ENCODE measurements at regions of chr11 and their contacts with region 1.

Region 1: DNA sequence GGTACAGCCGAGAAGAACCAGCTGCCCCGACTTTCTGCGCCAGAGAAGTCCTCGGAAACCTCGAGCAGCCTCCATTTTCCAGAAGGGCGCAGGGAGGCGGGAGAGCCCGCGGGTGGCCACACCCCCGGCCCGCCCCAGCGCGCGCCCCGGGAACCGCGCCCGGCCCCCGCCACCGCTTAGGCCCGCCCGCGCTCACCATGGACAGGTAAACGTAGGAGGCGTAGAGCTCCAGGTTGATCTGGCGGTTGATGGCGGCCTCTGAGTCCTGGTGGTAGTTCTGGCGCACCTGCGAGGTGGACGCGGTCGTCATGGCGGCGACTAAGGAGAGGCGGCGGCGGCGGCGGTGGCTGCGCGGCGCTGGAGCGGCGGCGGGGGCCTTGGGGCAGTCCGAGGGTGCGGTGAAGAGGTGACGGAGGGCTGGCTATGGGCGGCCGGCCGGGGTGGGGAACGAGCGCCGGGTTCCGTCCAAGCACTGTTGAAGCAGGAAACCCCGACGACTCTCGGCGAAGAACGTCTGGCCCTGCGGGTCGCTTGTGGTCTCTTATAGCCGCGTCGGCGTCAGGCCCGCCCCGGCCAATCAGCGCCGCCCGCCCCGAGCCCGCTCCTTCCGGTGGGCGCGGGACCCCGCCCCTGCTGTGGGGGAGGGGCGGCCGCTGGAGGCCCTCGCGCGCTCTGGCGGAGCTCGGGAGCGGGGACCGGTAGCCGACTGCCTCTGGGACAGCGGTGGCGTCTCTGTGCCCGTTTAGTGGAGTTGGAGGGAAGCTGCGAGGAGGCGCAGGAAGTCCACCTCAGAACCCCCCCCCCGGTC is at the start of gene FTH1:
- DNase-seq: peak; percentile 61 to 94
- H3K4me3 ChIP-seq: peak within 1 kb of the TSS; percentile 88 to 96
- H3K27ac ChIP-seq: peak within 1 kb of the TSS; percentile 98 to 99
- H3K4me1 ChIP-seq: peaks cover 23 to 46% of the 10 kb centered on the region in 2 donors
- H3K27me3 ChIP-seq: no peaks in the 10 kb centered on the region
- CTCF ChIP-seq: no peak
- total RNA-seq, gene FTH1: 2,353 TPM

Region 2: GRCh38 chr11:61816736-61817455 is 150.4 kb before region 1 on chr11 and contains the start of gene FADS1:
- intact Hi-C with region 1: loop called (anchors 5 kb)
- DNase-seq: peak; percentile 78 to 98
- H3K4me3 ChIP-seq: peak within 1 kb of the TSS; percentile 85 to 86
- H3K27ac ChIP-seq: peak within 1 kb of the TSS; percentile 99
- H3K4me1 ChIP-seq: peaks cover 0 to 9% of the 10 kb centered on the region in 2 donors
- H3K27me3 ChIP-seq: no peaks in the 10 kb centered on the region
- CTCF ChIP-seq: peak; percentile 55 to 74 (median 58)
- total RNA-seq, gene FADS1: 47.1 TPM

Region 3: GRCh38 chr11:61891331-61892084 is 75.8 kb before region 1 on chr11 and contains the start of gene FADS3:
- intact Hi-C with region 1: loop called (anchors 1 kb)
- DNase-seq: peak; percentile 80 to 96
- H3K4me3 ChIP-seq: peak within 1 kb of the TSS; percentile 99
- H3K27ac ChIP-seq: peak within 1 kb of the TSS; percentile 90 to 98
- H3K4me1 ChIP-seq: peaks cover 22 to 30% of the 10 kb centered on the region in 2 donors
- H3K27me3 ChIP-seq: no peaks in the 10 kb centered on the region
- CTCF ChIP-seq: no peak
- total RNA-seq, gene FADS3: 191 TPM

Region 4: GRCh38 chr11:61917341-61918109 is 49.8 kb before region 1 on chr11 and contains the start of gene RAB3IL1:
- intact Hi-C with region 1: loop called (anchors 2 kb)
- DNase-seq: peak in 1 of 2 donors; percentile 81
- H3K4me3 ChIP-seq: peak within 1 kb of the TSS; percentile 67 to 90
- H3K27ac ChIP-seq: peak within 1 kb of the TSS; percentile 39 to 54
- H3K4me1 ChIP-seq: peaks cover 3 to 8% of the 10 kb centered on the region in 2 donors
- H3K27me3 ChIP-seq: no peaks in the 10 kb centered on the region
- CTCF ChIP-seq: no peak
- total RNA-seq, gene RAB3IL1: 23.2 TPM

Region 5: DNA sequence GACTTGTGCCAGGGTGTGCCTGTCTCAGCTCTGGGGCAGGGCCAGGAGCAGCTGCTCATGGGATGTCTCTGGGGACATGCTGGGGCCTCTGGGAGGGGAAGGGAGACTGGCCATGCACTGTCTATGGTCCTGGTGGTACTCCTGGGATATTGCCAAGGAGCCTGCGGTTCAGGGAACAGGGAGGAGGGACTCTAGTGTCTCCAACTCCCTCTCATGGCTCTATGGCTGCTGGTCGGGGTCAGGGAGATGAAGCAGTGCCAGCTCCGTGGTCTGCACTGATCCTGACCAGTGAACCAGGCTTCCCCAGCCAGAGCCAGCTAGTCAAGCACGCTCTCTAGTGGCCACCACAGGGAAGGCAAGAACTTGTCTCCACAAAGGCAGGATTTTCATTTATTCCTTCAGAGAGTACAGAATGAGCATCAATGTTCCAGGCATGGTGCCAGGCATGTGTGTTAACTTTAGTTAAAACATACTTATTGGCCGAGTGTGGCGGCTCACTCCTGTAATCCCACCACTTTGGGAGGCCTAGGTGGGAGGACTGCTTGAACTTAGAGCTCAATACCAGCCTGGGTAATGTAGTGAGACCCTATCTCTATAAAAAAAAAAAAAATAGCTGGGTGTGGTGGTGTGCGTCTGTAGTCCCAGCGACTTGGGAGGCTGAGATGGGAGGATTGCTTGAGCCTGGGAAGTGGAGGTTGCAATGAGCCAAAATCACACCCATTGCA is 19.7 kb before region 1 on chr11:
- intact Hi-C with region 1: loop called (anchors 1 kb)
- DNase-seq: peak; percentile 69 to 96
- H3K4me3 ChIP-seq: no peak overlapping the region
- H3K27ac ChIP-seq: peak overlapping the region in 1 of 2 donors; percentile 39
- H3K4me1 ChIP-seq: peaks cover 3 to 11% of the 10 kb centered on the region in 2 donors
- H3K27me3 ChIP-seq: no peaks in the 10 kb centered on the region
- CTCF ChIP-seq: peak; percentile 91 to 94 (median 94)

Region 6: DNA sequence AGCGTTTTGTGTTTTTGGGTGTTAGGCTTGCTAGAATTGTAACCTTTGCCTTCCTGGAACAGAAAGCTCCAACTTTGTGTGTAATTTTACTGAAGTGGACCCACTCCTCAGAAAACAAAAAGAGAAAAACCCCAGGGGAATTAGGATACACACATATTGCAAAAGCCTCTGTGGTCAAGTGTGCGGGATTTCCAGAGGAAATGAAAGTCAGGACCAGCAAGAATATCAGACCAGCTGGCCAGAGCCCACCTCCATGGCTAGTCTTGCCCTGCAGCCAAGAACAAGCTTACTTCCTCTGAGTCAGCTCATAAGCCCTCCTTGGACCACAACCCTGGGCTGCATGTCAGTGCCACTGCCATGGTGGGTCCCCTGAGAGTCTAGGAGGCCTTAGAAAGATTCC is 37.2 kb after region 1 on chr11:
- intact Hi-C with region 1: loop called (anchors 2 kb)
- DNase-seq: peak; percentile 59 to 91
- H3K4me3 ChIP-seq: no peak overlapping the region
- H3K27ac ChIP-seq: peak overlapping the region; percentile 75 to 78
- H3K4me1 ChIP-seq: peaks cover 0 to 10% of the 10 kb centered on the region in 2 donors
- H3K27me3 ChIP-seq: no peaks in the 10 kb centered on the region
- CTCF ChIP-seq: no peak

Region 7: DNA sequence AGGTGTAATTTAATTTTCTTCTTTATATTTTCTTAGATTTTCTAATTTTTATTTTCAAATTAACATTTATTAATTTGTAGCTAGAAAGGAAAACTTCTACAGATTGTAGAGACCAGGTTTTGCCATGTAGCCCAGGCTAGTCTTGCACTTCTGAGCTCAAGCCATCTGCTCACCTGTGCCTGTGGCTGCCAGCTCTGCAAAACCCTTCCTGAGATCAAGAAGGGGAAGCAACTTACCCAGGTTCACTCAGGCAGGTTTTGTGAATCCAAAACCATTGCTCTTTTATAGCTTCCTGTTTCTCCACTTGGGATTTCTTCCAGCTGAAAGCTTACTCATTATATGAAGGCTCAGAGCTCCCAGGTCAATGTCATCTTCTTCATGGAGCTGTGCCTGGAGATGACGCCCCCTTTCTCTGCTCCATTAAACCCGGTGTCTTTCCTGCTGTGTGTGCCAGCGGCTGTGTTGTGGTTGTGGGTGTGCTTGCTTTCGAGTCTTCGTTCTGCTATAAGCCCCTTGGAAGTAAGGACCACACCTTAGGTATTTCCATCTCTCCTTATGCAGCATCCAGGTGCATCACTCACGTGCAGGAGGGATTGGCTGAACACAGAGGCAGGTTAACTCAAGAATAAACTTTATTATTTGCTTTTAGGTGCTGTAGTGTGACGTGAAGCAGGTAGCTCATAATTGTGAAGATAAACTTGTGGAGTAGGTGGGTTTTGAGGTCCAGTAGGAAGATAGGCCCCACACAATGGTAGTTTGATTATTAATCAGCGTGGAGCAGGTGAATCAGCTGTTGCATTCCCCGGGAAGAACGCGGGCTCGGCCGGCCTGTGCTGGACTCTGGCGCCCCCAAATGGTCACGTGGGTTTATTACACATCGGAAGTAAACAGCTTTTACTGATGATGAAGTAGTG is 114.3 kb after region 1 on chr11:
- intact Hi-C with region 1: loop called (anchors 5 kb)
- DNase-seq: peak; percentile 21 to 89
- H3K4me3 ChIP-seq: peak overlapping the region in 1 of 2 donors; percentile 5
- H3K27ac ChIP-seq: no peak overlapping the region
- H3K4me1 ChIP-seq: no peaks in the 10 kb centered on the region
- H3K27me3 ChIP-seq: no peaks in the 10 kb centered on the region
- CTCF ChIP-seq: peak; percentile 90 to 94 (median 93)

Region 8: DNA sequence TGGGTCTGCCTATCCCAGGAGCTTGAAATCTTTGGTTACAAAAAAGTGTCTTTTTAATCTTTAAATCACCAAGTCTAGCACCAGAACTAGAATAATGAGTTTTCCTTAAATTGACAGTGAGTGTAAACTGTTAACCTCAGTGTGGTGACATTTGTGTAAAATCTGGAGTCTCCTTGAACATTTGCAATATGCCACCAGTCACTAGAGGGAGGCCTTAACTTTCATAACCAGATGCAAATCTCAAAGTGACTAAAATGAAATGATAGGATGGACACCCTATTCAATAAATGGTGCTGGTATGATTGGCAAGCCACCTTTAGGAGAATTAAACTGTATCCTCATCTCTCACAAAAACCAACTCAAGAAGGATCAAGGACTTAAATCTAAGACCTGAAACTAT is 266.4 kb after region 1 on chr11:
- intact Hi-C with region 1: no loop called
- DNase-seq: no peak
- H3K4me3 ChIP-seq: no peak overlapping the region
- H3K27ac ChIP-seq: no peak overlapping the region
- H3K4me1 ChIP-seq: no peaks in the 10 kb centered on the region
- H3K27me3 ChIP-seq: no peaks in the 10 kb centered on the region
- CTCF ChIP-seq: no peak